Activated T-helper 2 cell treated with anti-CD3 and anti-CD28 coated beads, Interferon-gamma antibody, Interleukin-2, Interleukin-4, amounts not matched to agents 10 μg/mL and 5 μg/mL and 100 μg/mL, durations not matched to agents 14 hours and 24 hours and 36 hours (primary cell): ENCODE measurements at regions of chr4 and their contacts with region 1.

Region 1: DNA sequence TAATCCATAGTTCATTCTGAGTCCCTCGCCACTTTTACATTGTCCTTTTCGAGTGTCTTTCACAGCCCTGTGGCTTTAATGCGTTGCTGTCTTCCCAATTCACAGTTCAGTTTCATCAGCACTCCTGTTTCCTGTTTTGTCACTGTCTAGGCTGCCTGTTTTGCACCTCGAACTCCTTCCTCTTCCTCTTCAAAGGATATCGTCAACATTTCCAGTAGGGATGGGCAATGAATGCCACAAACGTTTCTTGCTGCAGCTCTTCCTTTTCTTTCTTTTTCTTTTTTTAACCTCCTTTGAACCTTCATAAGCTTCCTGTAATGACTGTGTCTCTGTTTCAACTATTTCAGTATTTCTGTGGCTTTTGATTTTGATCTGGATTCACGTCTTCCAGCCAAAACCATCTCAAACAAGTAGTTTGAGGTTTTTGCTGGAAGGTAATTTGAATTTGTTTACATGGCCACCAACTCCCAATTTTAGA is 105.4 kb downstream of the ANXA3 start:
- DNase-seq: no peak
- H3K4me3 Mint-ChIP-seq: peak overlapping the region; percentile 24
- H3K27ac Mint-ChIP-seq: peak overlapping the region; percentile 37
- H3K4me1 Mint-ChIP-seq: peaks cover 42% of the 10 kb centered on the region
- H3K27me3 Mint-ChIP-seq: peaks cover 12% of the 10 kb centered on the region

Region 2: GRCh38 chr4:77862478-77863216 is 794.4 kb before region 1 on chr4 and contains the start of gene MRPL1:
- intact Hi-C with region 1: loop called (anchors 5 kb)
- DNase-seq: peak; percentile 86
- H3K4me3 Mint-ChIP-seq: peak within 1 kb of the TSS; percentile 93
- H3K27ac Mint-ChIP-seq: peak within 1 kb of the TSS; percentile 99
- H3K4me1 Mint-ChIP-seq: peaks cover 41% of the 10 kb centered on the region
- H3K27me3 Mint-ChIP-seq: no peaks in the 10 kb centered on the region
- total RNA-seq, gene MRPL1: 50.6 and 60.3 TPM in 2 replicates

Region 3: GRCh38 chr4:78336093-78336943 is 320.7 kb before region 1 on chr4:
- intact Hi-C with region 1: no loop called
- DNase-seq: no peak
- H3K4me3 Mint-ChIP-seq: no peak overlapping the region
- H3K27ac Mint-ChIP-seq: no peak overlapping the region
- H3K4me1 Mint-ChIP-seq: no peaks in the 10 kb centered on the region
- H3K27me3 Mint-ChIP-seq: peaks cover 21% of the 10 kb centered on the region

Region 4: DNA sequence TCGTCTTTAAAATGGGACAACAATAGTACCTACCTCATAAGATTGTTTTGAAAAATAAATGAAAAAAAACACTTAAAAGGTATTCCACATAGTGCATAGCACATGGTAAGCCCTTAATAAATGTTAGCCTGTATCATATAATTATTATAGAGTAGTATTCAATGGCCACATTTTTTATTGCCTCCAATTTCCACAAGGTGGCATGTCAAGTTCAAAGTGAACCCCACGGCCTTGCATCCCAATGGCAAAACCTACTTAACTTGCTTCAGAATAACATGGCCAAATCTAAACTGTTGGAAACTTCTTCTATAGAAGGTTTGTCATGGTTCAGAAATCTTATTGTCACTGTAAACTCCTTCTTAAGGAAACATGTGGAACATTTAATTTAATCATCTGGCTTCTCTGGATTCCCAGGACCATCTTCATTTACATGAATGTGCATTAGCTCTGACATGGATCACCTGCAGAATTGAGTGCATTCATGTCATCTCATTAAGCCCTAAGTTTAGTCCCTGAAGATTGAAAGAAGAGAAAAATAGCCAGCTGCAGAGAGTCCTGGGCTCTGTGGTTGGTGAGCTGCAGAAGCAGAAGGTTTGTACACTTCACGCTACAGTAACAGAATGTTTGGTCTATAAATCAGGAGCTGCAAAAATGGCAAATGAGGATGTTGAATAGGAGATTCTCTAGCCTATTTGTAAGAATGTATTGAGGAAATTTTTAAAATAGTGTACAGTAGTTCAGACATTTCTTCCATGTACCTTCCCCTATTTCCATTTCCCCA is 44.4 kb before region 1 on chr4:
- intact Hi-C with region 1: loop called (anchors 2 kb)
- DNase-seq: no peak
- H3K4me3 Mint-ChIP-seq: no peak overlapping the region
- H3K27ac Mint-ChIP-seq: no peak overlapping the region
- H3K4me1 Mint-ChIP-seq: peaks cover 45% of the 10 kb centered on the region
- H3K27me3 Mint-ChIP-seq: peaks cover 8% of the 10 kb centered on the region

Region 5: DNA sequence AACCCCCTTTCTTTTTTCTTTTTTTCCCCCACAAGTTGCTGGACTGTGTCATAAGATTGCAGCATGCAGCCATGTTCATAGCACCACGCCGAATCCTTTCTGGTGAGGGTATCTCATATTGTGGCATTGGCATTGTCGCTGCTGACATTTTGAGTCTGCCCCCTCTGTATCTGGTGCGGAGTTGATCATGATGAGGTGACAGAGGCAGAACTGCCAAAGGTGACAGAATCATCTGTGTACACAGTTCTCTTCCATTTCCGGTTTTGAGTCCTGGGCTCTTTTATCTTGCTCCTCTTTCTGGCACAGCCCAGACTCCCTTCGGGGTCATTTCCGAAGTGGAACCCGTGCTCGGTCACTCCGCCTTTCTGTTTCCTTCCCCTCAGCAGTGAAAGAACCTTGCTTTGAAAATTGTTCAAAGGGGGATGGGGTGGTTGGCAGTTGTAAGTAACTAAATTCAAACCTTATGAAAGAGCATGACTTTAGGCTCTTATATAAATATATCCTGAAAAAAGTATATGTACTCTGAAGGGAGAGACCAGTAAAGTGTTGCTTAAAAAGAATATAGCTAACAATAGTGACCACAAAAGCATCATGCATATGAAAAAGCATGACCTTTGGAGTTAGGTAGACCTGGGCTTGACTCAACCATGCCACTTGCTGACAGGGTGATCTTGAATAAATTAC is 64.1 kb after region 1 on chr4:
- intact Hi-C with region 1: loop called (anchors 1 kb)
- DNase-seq: peak; percentile 14
- H3K4me3 Mint-ChIP-seq: peak overlapping the region; percentile 34
- H3K27ac Mint-ChIP-seq: peak overlapping the region; percentile 30
- H3K4me1 Mint-ChIP-seq: peaks cover 18% of the 10 kb centered on the region
- H3K27me3 Mint-ChIP-seq: peaks cover 6% of the 10 kb centered on the region

Region 6: DNA sequence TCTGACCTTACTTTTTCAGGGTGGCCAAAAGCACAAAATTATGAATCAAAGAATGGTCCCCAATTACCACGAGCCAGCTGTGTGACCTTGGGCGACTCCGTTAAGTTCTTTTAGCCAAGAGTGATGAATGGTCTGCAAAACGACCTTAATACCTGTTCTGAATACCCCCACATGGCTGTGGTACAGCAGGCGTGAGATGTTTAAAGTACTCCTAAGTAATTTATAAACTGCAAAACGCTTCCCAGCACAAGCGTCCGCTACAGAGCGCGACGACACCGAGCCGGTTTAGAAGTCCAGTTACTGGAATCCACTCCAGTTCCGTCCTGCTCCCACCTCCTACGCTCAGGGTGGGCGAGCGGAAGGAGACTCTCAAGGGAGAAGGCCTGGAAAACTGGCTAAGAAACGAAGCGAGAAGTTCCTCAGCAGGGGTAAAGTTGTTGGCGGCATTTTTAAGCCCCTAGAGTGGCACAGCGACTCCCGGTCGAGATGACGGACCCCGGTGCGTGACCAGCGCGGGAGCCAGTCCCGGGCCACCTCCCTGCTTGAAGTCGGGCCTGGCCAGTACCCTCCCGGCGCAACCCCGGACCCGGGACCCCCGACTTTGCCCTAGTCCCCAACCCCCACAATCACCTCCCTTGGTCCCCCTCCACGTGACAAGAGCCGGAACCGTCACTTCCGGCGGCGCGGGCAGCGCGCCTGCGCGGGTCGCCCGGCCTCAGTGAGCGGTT is 118.5 kb after region 1 on chr4:
- intact Hi-C with region 1: loop called (anchors 1 kb)
- DNase-seq: peak; percentile 83
- H3K4me3 Mint-ChIP-seq: peak overlapping the region; percentile 93
- H3K27ac Mint-ChIP-seq: peak overlapping the region; percentile 96
- H3K4me1 Mint-ChIP-seq: peaks cover 32% of the 10 kb centered on the region
- H3K27me3 Mint-ChIP-seq: no peaks in the 10 kb centered on the region

Region 7: DNA sequence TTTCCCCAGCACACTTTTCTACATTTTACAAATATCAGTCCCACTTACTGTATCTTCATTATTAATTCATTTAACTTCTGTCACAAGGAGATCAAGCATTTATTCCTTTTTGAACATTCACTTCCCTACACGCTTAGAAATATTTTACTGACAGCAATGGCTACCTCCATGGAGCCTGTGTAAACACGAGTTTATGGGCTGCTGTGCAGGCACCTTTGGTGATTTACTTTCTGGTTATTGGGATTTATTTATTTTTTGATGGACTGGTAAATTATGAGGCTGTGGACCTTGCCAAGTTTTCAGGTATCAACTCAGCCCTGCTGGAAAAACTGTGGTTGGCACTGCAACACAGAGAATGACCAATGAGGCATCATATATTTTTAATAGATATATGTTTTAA is 327.6 kb after region 1 on chr4:
- intact Hi-C with region 1: no loop called
- DNase-seq: no peak
- H3K4me3 Mint-ChIP-seq: no peak overlapping the region
- H3K27ac Mint-ChIP-seq: no peak overlapping the region
- H3K4me1 Mint-ChIP-seq: no peaks in the 10 kb centered on the region
- H3K27me3 Mint-ChIP-seq: peaks cover 7% of the 10 kb centered on the region